HEK293 (cell line): ENCODE measurements at regions of chr1 and their contacts with region 1.

Region 1: GRCh38 chr1:231421993-231422764 is at the start of gene EGLN1:
- H3K4me3 ChIP-seq: peak within 1 kb of the TSS; percentile 97
- H3K27ac ChIP-seq: peak within 1 kb of the TSS; percentile 98
- H3K4me1 ChIP-seq: peaks cover 24% of the 10 kb centered on the region
- CTCF ChIP-seq: peak; percentile 99

Region 2: GRCh38 chr1:231410036-231410612 is 12.1 kb before region 1 on chr1:
- CTCF ChIA-PET with region 1: interaction called, 11 read pairs
- POLR2A ChIA-PET with region 1: interaction called, 5 read pairs
- H3K4me3 ChIP-seq: no peak overlapping the region
- H3K27ac ChIP-seq: no peak overlapping the region
- H3K4me1 ChIP-seq: peaks cover 31% of the 10 kb centered on the region
- CTCF ChIP-seq: no peak